ENCODE measurements at regions of chr17 and their contacts with region 1.

Region 1: DNA sequence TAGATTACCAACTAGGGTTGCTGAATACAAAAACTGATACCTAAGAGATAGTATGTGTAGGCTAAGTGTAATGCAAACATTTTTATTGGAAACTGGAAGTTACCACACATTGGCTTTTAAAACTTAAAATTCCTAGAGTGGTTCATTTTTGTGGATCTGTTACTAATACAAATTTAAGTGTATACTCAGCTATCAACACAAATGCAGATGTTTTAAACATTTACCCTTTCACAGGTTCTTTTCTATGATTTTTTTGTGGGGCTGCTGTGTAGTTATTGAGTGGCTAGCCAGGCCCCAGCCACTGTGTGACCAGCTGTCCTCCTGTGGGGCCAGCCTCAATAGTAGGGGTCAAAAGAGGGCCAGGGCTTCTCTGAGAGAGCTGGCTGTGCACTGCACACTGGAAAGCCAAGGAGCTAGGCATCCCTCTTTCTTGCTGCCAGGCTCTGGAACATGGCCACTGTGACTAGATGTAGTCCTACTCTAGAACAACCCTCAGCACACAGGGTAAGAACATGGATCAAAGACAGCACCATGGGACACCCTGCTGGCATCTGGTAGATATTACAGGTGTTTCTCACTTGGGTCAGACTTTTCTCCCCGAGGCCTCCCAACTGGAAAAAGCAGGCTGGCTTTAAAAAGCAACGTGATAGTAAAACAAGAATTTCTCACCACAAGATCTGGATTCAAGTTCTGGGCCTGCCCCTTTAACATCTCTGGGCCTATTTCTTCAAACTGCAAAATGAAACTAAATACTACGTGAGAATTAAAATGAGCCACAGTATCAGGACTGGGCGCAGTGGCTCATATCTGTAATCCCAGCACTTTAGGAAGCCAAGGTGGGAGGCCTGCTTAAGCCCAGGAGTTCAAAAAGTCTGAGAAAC is 7.3 kb upstream of the VEZF1 start:
- DNase-seq: peak; percentile 66
- ATAC-seq: peak; percentile 80
- H3K4me3 Mint-ChIP-seq: peak overlapping the region; percentile 0
- H3K27ac Mint-ChIP-seq: peak overlapping the region; percentile 47
- H3K4me1 Mint-ChIP-seq: peaks cover 64% of the 10 kb centered on the region
- H3K27me3 Mint-ChIP-seq: no peaks in the 10 kb centered on the region

Region 2: DNA sequence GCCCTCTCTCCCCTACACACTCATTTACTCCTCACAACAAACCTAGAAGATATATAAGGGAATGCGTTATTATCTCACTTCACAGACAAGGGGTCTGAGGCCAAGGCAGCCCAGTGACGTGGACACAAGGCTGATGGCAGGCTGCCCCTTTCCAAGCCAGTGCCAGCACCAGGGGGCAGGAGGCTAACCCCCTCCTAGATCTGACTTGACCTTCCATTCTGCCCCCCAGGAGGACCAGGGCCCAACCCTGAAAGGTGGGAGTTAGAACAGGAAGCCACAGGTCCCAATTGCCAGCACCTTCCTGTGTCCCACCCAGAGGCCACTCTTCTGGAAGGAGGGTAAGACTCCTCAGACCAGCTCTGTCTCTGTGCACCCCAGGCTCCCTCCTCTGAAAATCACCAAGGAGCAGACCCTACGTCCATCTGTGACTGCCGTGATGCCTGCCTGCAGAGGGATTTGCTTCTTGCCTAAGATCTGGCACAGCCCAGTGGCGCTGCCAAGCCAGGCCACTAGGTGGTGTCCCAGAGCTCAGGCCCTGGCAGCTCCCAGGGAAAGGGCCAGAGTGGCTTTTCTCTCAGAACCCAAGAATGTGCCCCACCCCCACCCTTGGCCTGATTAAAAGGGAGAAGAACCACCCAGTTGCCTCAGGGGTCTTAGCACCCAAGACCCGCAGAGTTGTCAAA is 103.0 kb before region 1 on chr17:
- CTCF ChIA-PET with region 1: interaction called, 35 read pairs
- DNase-seq: peak; percentile 85
- ATAC-seq: peak; percentile 88
- H3K4me3 Mint-ChIP-seq: no peak overlapping the region
- H3K27ac Mint-ChIP-seq: no peak overlapping the region
- H3K4me1 Mint-ChIP-seq: peaks cover 13% of the 10 kb centered on the region
- H3K27me3 Mint-ChIP-seq: peaks cover 11% of the 10 kb centered on the region

Region 3: DNA sequence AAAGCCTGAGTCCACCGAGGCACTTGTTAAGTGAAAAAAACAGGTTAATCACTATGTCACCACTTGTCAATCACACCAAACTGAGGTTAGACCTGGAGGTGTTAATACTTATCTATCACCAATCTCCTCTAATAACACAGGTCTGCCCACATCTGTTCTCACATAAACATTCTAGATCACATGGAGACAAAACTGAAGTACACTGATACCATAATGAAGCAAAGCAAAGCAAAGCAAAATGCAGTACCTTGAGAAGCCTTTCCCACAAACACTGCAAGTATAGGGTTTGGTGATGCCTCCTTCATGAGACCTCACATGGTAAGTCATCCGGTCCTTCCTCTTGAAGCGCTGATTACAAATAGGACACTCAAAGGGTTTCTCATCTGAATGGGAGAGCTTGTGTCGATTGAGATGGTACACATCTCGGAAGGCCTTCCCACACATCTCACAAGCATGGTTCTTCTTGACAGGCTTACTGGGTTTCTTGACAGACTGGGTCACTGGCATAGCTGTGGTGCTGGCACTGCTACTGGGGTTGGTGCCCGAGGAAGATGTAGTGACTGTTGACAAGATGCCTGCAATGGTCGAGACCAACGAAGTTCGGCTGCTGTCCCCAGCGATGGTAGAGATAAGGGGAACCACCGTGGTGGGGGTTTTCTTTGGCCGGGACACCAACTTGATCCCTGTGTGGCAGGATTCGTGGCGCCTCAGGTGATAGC is 12.7 kb before region 1 on chr17:
- CTCF ChIA-PET with region 1: interaction called, 35 read pairs
- DNase-seq: no peak
- ATAC-seq: no peak
- H3K4me3 Mint-ChIP-seq: no peak overlapping the region
- H3K27ac Mint-ChIP-seq: no peak overlapping the region
- H3K4me1 Mint-ChIP-seq: peaks cover 51% of the 10 kb centered on the region
- H3K27me3 Mint-ChIP-seq: no peaks in the 10 kb centered on the region

Region 4: GRCh38 chr17:58006924-58007780 is 11.8 kb after region 1 on chr17 and contains the start of gene SRSF1:
- CTCF ChIA-PET with region 1: interaction called, 61 read pairs
- DNase-seq: peak; percentile 98
- ATAC-seq: peak; percentile 87
- H3K4me3 Mint-ChIP-seq: peak within 1 kb of the TSS; percentile 100
- H3K27ac Mint-ChIP-seq: peak within 1 kb of the TSS; percentile 100
- H3K4me1 Mint-ChIP-seq: peaks cover 42% of the 10 kb centered on the region
- H3K27me3 Mint-ChIP-seq: no peaks in the 10 kb centered on the region
- total RNA-seq, gene SRSF1: 365 to 418 TPM